ENCODE measurements at regions of chr2 and their contacts with region 1.

Region 1: GRCh38 chr2:152635635-152636298 is 81.5 kb downstream of the PRPF40A start:
- DNase-seq: no peak
- ATAC-seq: peak; percentile 89
- H3K4me3 ChIP-seq: no peak overlapping the region
- H3K27ac ChIP-seq: no peak overlapping the region
- H3K4me1 ChIP-seq: no peaks in the 10 kb centered on the region
- H3K27me3 ChIP-seq: no peaks in the 10 kb centered on the region
- CTCF ChIP-seq: peak; percentile 73 to 84 (median 75)
- EP300 ChIP-seq: no peak
- POLR2A ChIP-seq: no peak
- RAD21 ChIP-seq: peak; percentile 86

Region 2: DNA sequence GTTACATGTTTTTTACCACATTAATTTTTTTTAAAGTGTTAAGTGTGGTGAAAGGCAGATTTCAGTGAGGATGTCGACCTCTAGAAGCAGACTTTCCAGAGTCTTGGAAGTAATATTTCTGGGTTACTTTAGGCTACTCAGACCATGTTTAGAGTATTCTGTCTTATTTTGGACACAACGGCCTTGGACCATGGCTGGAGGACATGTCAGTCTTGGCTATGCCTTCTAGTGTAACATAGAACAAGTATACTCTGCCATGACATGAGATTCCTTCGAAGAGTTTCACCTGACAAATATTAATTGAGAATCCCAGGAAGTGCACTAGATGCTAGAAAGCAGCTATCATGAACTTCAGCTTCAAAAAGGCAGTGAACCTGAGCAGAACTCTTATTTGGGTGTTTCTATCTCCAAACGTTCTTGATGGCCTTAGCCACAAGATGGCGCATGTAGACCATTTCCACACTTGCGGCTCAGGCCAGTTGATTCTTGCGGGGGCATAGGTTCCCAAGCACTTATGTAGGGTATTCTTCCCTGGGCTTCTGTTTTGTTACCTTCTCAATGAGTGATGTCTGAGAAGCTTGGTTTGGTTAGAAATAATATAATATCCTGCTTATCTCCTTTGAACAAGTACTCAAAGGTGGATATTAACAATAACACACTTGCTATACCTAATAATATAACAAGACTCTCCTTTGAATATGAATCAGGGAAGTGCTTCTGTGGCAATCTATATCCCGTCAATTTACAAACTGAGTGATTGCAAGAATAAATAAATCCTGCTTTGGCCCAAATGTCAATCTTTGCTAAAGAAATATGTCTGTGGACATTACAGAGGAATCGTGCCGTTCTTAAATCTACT is 598.9 kb before region 1 on chr2:
- CTCF ChIA-PET with region 1: interaction called, 47 read pairs
- POLR2A ChIA-PET with region 1: no interaction called
- RAD21 ChIA-PET with region 1: interaction called, 6 read pairs
- SMC1A ChIA-PET with region 1: interaction called, 22 read pairs
- in situ Hi-C with region 1: loop called (anchors 5 kb)
- intact Hi-C with region 1: loop called (anchors 1 kb)
- DNase-seq: no peak
- ATAC-seq: peak; percentile 97
- H3K4me3 ChIP-seq: no peak overlapping the region
- H3K27ac ChIP-seq: no peak overlapping the region
- H3K4me1 ChIP-seq: no peaks in the 10 kb centered on the region
- H3K27me3 ChIP-seq: no peaks in the 10 kb centered on the region
- CTCF ChIP-seq: peak; percentile 78 to 89 (median 80)
- EP300 ChIP-seq: no peak
- POLR2A ChIP-seq: no peak
- RAD21 ChIP-seq: peak; percentile 99

Region 3: GRCh38 chr2:152189622-152190495 is 445.9 kb before region 1 on chr2:
- CTCF ChIA-PET with region 1: interaction called, 52 read pairs
- POLR2A ChIA-PET with region 1: no interaction called
- RAD21 ChIA-PET with region 1: interaction called, 13 read pairs
- SMC1A ChIA-PET with region 1: interaction called, 17 read pairs
- in situ Hi-C with region 1: loop called (anchors 5 kb)
- intact Hi-C with region 1: loop called (anchors 1 kb)
- DNase-seq: no peak
- ATAC-seq: peak; percentile 94
- H3K4me3 ChIP-seq: no peak overlapping the region
- H3K27ac ChIP-seq: no peak overlapping the region
- H3K4me1 ChIP-seq: no peaks in the 10 kb centered on the region
- H3K27me3 ChIP-seq: no peaks in the 10 kb centered on the region
- CTCF ChIP-seq: peak; percentile 71 to 79 (median 73)
- EP300 ChIP-seq: no peak
- POLR2A ChIP-seq: no peak
- RAD21 ChIP-seq: peak; percentile 97

Region 4: DNA sequence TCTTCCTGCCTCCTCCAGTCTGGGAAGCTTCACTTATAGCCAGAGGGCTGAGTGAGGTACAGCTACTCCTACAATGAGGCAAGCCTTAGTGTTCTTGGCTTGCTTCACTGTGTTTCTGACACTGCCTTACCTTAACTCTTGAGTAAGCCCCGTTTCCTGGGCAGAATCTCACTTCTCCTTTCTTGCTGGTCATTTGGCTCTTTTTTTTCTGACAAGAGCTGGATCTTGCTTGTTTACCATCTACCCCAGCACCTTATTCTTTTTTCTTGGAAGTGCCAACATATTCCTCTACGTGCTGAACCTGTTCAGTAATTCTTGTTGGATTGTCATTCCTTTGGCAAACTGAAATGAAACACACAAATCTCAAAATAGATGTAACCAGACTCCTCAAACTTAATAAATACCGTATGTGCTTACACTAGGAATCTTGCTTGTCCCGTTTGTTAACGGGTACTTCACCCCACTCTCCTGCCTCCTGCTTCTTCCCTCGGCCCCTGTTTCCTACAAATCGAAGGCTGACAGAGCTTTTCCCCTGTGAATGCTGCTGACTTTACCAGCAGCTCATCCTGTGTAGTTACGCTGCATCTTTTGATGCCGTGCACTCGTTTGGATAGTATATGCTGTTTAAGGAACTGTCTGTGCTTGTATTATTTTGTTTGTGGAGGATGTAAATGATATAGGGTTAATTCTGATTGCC is 168.6 kb before region 1 on chr2:
- CTCF ChIA-PET with region 1: interaction called, 19 read pairs
- POLR2A ChIA-PET with region 1: no interaction called
- RAD21 ChIA-PET with region 1: interaction called, 12 read pairs
- SMC1A ChIA-PET with region 1: interaction called, 11 read pairs
- in situ Hi-C with region 1: no loop called
- intact Hi-C with region 1: loop called (anchors 5 kb)
- DNase-seq: peak; percentile 74
- ATAC-seq: peak; percentile 95
- H3K4me3 ChIP-seq: peak overlapping the region; percentile 33; the same call in 1 of the 2 replicates
- H3K27ac ChIP-seq: peak overlapping the region; percentile 62
- H3K4me1 ChIP-seq: peaks cover 23% of the 10 kb centered on the region
- H3K27me3 ChIP-seq: no peaks in the 10 kb centered on the region
- CTCF ChIP-seq: no peak
- EP300 ChIP-seq: peak in 1 of 2 experiments; percentile 91; a peak in 2 of 4 replicates
- POLR2A ChIP-seq: no peak
- RAD21 ChIP-seq: no peak

Region 5: GRCh38 chr2:152573168-152573567 is 62.6 kb before region 1 on chr2:
- CTCF ChIA-PET with region 1: interaction called, 5 read pairs
- POLR2A ChIA-PET with region 1: no interaction called
- RAD21 ChIA-PET with region 1: interaction called, 4 read pairs
- SMC1A ChIA-PET with region 1: interaction called, 16 read pairs
- in situ Hi-C with region 1: no loop called
- intact Hi-C with region 1: no loop called
- DNase-seq: peak; percentile 70
- ATAC-seq: peak; percentile 96
- H3K4me3 ChIP-seq: no peak overlapping the region
- H3K27ac ChIP-seq: no peak overlapping the region
- H3K4me1 ChIP-seq: peaks cover 5% of the 10 kb centered on the region; the same call in 1 of the 2 replicates
- H3K27me3 ChIP-seq: no peaks in the 10 kb centered on the region
- CTCF ChIP-seq: no peak
- EP300 ChIP-seq: peak; percentile 65 to 68; a peak in 3 of 4 replicates
- POLR2A ChIP-seq: no peak
- RAD21 ChIP-seq: no peak

Region 6: DNA sequence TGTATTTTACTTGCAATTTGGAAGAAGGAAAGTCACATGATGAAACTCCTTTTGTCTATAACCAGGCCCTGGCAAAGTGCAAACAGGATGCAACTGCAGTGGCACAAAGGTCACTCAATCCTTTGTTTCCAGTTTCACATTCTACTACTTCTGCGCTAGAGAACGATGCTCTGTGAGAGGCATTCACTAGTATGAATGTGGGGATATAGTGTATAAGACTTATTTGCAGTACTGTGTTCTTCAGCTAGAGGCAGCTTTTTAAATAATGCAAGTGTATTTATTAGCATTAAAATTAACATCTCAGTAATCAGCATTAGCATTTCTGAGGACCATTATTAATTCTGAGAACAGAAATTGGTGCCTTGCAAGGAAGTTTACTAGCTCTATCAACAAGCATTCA is 12.6 kb after region 1 on chr2:
- CTCF ChIA-PET with region 1: interaction called, 33 read pairs
- POLR2A ChIA-PET with region 1: interaction called, 3 read pairs
- RAD21 ChIA-PET with region 1: interaction called, 5 read pairs
- SMC1A ChIA-PET with region 1: interaction called, 18 read pairs
- in situ Hi-C with region 1: no loop called
- intact Hi-C with region 1: no loop called
- DNase-seq: no peak
- ATAC-seq: peak; percentile 54
- H3K4me3 ChIP-seq: no peak overlapping the region
- H3K27ac ChIP-seq: no peak overlapping the region
- H3K4me1 ChIP-seq: no peaks in the 10 kb centered on the region
- H3K27me3 ChIP-seq: no peaks in the 10 kb centered on the region
- CTCF ChIP-seq: no peak; a peak in 1 of 6 replicates
- EP300 ChIP-seq: no peak
- POLR2A ChIP-seq: no peak
- RAD21 ChIP-seq: no peak